ENCODE measurements at regions of chr17 and their contacts with region 1.

Region 1: GRCh38 chr17:82320956-82321927 is 3.8 kb upstream of the CD7 start:
- DNase-seq: no peak

Region 2: DNA sequence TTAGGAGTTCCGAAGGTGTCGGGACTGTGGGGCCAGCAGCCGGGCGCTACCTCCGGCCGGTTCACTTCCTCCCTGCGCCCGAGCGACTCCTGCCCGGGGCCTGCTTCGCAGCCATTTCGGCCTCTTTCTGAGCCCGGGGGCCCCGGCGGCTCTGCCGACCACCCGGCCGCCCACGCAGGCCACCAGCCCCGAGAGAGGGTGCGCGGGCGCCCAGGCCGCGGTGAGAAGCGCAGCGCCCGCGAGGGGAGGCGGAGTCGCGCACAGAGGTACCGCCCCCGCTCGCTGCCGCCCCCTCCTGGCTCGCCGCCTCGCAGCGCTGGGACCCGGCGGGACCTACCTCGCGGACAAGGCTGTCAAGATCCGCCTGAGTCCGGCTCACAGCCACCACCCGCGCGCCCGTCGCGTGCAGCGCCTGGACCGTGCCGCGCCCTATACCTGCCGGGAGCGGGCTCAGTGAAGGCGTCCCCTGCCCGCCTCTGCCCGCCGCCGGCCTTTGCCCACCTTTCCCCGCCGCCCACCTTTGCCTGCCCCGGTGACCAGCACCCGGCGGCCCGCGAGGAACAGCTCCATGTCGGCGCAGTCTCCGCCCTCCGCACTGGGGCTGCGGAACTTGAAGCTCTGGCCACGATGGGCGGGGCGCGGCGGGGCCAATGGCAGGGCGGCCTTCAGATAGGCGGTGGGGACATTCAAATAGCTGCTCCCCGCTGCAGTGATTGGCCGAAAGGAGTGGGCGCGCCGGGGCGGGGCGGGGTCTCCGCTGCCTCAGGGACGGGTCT is 283.9 kb before region 1 on chr17 and contains the start of gene DCXR:
- intact Hi-C with region 1: loop called in 1 of 2 experiments (anchors 10 kb)
- DNase-seq: peak; percentile 99
- total RNA-seq, gene DCXR: 44.1 to 52.1 TPM

Region 3: DNA sequence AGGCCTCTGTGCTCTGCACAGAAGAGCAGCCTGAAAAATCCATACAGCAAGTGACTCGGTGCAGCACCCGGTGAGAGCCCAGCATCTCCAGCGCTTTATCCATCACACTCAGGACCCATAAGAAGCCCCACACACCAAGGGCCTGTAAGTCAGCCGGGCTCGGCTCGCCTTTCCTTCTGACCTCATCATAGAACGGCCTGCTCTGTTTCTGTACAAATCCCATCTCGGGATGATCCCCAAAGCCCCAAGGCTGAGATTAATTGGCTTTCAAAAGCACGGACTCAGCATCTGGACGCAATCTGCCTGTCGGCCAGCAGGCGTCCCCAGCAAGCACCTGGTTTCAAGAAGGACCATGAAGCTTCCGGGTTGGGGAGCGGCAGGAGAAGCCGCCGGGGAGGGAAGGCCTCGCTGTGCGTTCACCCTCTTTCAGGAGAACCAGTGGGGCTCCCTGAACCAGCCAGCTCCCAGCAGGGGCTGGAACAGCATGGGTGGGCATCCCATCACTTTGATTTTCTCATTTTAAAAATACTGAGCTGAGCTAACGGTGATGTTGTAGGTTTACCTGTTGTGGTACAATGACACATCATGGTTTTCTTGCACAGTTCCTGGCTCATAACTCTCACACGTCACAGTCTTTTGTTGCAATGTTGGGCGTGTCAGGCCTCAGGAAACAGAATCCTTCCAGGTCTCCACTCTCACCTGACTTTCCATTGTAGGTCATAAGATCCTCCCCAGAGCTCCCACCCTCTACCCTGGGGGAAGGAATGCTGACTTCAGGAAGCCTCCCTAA is 115.3 kb before region 1 on chr17:
- intact Hi-C with region 1: loop called (anchors 10 kb)
- DNase-seq: peak; percentile 95

Region 4: DNA sequence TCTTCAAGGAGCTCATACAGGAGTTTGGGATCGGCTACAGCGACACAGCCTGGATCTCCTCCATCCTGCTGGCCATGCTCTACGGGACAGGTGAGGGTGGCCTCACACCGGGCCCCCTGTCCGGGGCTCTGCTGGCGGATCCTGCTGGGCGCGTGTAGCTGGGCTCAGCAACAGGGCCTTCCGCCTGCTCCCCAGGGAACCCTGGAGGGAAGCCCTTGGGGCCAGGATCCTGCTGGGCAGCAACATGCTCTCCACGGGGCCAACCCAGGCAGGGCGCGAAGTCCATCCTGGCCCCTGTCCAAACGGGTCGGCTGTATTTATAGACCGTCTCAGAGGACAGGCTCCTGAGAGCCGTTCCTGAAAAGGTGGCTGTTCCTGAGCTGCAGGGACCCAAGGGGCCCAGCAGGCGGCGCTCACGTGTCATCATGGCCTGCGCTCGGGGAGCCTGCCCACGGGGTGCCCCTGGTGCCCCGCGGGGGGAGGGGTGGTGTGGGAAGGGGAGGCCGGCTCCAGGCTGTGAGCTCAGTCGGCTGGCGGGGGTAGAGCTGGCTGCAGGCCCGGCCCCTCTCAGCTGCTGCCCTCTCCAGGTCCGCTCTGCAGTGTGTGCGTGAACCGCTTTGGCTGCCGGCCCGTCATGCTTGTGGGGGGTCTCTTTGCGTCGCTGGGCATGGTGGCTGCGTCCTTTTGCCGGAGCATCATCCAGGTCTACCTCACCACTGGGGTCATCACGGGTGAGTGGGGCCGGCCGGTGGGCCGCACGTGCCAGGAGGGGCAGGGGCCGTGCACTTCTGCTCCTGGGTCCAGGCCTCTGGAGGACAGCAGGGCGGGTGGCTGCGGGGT is 84.9 kb before region 1 on chr17:
- intact Hi-C with region 1: loop called (anchors 2 kb)
- DNase-seq: peak; percentile 91

Region 5: DNA sequence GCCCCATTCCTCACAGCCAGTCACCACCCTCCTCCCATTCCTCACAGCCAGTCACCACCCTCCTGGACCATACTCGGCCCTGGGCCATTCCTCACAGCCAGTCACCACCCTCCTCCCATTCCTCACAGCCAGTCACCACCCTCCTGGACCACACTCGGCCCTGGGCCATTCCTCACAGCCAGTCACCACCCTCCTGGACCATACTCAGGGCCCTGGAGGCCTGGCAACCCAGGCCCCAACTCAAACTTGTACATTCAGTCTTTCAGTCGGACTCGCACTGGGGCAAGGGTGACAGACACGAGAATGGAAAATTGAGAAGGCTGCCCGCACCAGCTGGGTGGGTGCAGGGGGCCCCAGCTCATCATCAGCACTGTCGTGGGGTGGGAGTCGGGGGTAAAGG is 167.9 kb after region 1 on chr17:
- intact Hi-C with region 1: no loop called
- DNase-seq: peak; percentile 91

Region 6: GRCh38 chr17:82528484-82529265 is 207.4 kb after region 1 on chr17:
- intact Hi-C with region 1: no loop called
- DNase-seq: peak; percentile 83

Measured in posterior vena cava (tissue), 2 donors.